Left colon (tissue), 2 donors: ENCODE measurements at regions of chr22 and their contacts with region 1.

Region 1: DNA sequence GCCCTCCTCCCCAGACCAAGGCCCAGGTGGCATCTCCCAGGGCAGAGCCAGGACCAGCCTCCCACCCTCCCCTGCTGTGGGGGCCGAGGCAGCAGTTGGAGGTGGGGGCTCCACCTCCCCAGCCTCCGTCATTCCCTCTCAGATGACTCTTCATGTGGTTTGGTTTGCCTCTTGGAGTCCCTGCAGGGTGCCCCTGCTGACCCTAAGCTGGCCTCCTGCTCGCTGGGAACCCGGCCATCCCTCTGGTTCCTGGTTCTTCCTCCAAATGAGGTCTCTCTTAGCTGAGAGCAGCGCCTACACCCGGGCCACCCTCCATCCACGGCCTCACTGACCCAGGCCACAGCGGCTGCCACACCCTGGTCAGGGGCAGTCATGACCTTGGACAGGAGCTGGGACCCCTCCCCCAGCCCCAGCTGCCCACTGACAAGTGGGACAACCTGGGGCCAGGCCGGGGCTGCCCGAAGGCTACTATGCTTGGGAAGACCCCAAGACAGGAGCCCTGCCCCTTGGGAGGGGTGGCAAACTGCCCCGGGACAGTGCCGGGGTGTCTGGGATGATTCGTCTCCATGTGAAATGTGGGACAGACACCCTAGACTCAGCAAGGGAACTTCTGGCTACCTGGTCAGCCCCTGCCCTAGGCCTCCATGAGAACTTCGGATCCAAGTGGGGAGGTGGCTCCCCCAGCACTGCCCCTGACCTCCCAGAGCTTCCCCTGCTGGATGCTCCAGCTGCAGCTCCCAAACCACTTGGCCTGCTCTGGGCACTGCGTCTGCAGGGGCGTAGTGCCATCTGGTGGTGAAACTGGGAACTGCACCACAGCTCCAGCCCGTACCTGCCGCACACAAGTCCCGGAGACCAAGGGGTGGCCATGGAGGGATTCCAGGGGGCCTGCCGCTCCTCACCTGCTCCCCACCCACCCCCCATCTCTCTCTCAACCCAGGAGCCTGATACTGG is 194.5 kb downstream of the IGLL1 start:
- DNase-seq: peak; percentile 59 to 90
- ATAC-seq: peak; percentile 84

Region 2: DNA sequence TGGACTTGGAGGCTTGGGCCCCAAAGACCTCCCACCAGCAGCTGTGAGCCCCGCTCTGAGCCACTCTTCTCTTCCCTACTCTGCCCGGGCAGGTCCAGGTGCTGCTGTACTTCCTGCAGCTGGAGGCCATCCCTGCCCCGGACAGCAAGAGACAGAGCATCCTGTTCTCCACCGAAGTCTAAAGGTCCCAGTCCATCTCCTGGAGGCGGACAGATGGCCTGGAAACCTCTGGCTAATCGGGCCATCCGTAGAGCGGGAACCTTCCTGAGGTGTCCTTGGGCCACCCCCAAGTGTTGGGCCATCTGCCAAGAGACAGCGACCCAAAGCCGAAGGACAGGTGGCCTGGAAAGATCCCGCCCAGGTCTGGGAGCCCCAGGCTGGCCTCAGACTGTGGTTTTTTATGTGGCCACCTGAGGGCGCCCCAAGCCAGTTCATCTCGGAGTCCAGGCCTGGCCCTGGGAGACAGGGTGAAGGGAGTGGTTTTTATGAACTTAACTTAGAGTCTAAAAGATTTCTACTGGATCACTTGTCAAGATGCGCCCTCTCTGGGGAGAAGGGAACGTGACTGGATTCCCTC is 70.1 kb before region 1 on chr22:
- intact Hi-C with region 1: loop called in 1 of 2 experiments (anchors 10 kb)
- DNase-seq: peak in 1 of 2 donors; percentile 71
- ATAC-seq: peak; percentile 59